ENCODE measurements at regions of chr15 and their contacts with region 1.

Region 1: DNA sequence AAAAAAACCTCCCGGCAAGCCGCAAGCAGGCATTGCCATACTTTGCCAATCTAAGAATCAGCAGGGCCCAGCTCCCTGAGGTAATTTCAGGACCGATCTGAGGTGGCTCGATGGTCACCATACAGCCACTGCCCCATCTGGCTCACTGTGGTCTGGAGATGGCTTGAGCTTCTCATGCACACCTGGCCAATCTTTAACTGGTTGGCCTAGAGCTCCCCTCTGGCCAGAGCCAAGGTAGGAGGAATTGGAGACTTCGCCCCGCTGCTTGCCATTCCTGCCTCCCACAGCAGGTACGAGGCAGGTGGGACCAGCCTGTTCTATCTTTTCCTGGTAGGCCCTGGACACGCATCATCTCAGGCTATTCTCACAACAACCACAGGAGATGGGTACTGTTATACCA is 10.1 kb downstream of the CYP1A2 start:
- DNase-seq: no peak
- H3K4me3 ChIP-seq: no peak overlapping the region
- H3K4me3 Mint-ChIP-seq: no peak overlapping the region
- H3K27ac Mint-ChIP-seq: no peak overlapping the region
- H3K4me1 ChIP-seq: peaks cover 22% of the 10 kb centered on the region
- H3K4me1 Mint-ChIP-seq: no peaks in the 10 kb centered on the region
- H3K27me3 ChIP-seq: no peaks in the 10 kb centered on the region
- H3K27me3 Mint-ChIP-seq: no peaks in the 10 kb centered on the region
- CTCF ChIP-seq: no peak

Region 2: GRCh38 chr15:74635228-74635627 is 123.5 kb before region 1 on chr15:
- CTCF ChIA-PET with region 1: interaction called, 11 read pairs
- POLR2A ChIA-PET with region 1: no interaction called
- intact Hi-C with region 1: no loop called
- DNase-seq: peak; percentile 66 to 77
- H3K4me3 ChIP-seq: no peak overlapping the region
- H3K4me3 Mint-ChIP-seq: no peak overlapping the region
- H3K27ac Mint-ChIP-seq: peak overlapping the region; percentile 46
- H3K4me1 ChIP-seq: no peaks in the 10 kb centered on the region
- H3K4me1 Mint-ChIP-seq: peaks cover 14% of the 10 kb centered on the region
- H3K27me3 ChIP-seq: no peaks in the 10 kb centered on the region
- H3K27me3 Mint-ChIP-seq: no peaks in the 10 kb centered on the region
- CTCF ChIP-seq: peak; percentile 80 to 82

Region 3: GRCh38 chr15:74988007-74988800 is 229.5 kb after region 1 on chr15:
- CTCF ChIA-PET with region 1: no interaction called
- POLR2A ChIA-PET with region 1: no interaction called
- intact Hi-C with region 1: no loop called
- DNase-seq: peak; percentile 72 to 78
- H3K4me3 ChIP-seq: no peak overlapping the region
- H3K4me3 Mint-ChIP-seq: no peak overlapping the region
- H3K27ac Mint-ChIP-seq: no peak overlapping the region
- H3K4me1 ChIP-seq: no peaks in the 10 kb centered on the region
- H3K4me1 Mint-ChIP-seq: peaks cover 7% of the 10 kb centered on the region
- H3K27me3 ChIP-seq: peaks cover 1% of the 10 kb centered on the region; the same call in 1 of the 2 replicates
- H3K27me3 Mint-ChIP-seq: peaks cover 20% of the 10 kb centered on the region
- CTCF ChIP-seq: peak; percentile 62 to 84